ENCODE measurements at regions of chr6 and their contacts with region 1.

Region 1: DNA sequence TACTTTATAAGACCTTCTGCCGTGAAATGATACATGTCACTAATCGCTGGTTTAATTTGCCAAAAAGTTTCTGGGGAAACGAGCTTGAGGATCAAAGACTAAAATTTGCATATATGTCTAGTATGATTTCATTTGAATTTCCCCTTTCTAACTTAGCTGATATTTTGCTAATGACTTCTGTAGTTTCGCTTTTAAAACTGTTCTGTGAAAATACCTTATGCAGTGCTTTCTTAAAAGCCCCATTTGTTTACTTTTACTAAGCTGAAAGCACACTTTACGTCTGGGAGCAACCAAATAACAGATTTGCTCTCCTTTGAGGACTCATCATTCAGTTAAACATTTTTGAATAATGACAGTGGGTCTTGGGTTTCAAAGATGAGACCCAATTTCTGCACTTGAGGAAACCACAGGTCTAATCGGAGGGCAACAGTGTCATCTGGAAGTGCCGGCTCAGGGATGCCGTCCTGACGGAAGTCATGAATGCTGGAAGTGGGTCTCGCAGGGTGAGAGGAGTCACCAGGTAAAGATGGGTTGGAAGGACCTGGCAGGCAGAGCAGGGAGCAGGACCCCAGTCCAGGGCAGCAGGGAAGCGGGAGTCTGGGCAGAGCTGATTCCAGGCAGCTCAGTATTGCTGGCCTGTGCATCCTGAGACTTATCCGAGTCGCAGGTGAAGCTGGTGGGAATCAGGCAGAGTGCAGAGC is 33.2 kb downstream of the PLEKHG1 start:
- DNase-seq: peak; percentile 33
- ATAC-seq: peak; percentile 11
- H3K4me3 Mint-ChIP-seq: peak overlapping the region; percentile 99
- H3K27ac Mint-ChIP-seq: peak overlapping the region; percentile 97
- H3K4me1 Mint-ChIP-seq: peaks cover 91% of the 10 kb centered on the region
- H3K27me3 Mint-ChIP-seq: no peaks in the 10 kb centered on the region
- CTCF ChIP-seq: no peak

Region 2: DNA sequence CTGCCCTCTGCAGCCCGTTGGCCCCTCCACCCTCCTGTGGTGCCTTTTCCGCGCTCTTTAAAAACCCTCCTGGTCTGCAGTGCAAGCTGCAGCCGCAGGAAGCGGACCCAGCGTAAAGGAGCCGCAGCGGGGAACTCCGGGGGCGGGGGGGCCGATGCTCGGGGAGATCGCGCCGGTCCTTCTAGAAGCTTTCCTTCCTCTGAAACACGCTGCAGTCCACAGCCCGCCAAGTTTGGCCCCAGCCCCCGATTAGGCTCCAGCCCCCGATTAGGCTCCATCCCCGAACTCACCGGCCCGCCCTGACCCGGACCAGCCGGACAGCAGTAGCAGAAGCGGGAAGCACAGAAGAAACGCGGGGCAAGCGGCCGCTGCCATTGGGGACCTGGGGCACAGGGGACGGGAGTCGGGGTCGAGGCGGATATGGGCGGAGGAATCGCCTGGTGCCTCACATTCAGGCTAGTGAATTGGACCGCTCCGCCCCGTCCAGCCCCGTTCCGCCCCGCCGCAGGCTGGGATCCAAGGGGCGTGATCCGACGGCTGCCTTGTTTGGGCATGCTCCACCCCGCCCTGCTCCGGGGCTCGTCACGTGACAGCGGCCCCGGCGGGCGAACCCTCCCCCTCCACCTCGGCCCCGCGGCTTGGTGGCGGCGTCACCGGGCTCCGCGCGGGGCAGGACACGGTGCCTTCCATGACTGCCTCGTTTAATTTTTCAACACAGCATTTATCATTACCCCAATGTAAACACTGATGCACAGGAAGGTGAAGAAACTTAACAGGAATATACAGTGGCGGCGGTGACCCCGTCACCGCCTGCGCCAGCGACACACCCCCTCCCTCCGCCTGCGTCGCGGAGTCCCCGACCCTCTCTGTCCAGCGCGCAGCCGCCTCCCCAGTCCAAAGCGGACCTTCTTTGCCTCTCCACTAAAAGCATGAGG is 627.9 kb before region 1 on chr6:
- CTCF ChIA-PET with region 1: no interaction called
- POLR2A ChIA-PET with region 1: no interaction called
- intact Hi-C with region 1: loop called (anchors 10 kb)
- DNase-seq: peak; percentile 82
- ATAC-seq: peak; percentile 79
- H3K4me3 Mint-ChIP-seq: peak overlapping the region; percentile 92
- H3K27ac Mint-ChIP-seq: peak overlapping the region; percentile 95
- H3K4me1 Mint-ChIP-seq: peaks cover 34% of the 10 kb centered on the region
- H3K27me3 Mint-ChIP-seq: peaks cover 12% of the 10 kb centered on the region
- CTCF ChIP-seq: no peak

Region 3: DNA sequence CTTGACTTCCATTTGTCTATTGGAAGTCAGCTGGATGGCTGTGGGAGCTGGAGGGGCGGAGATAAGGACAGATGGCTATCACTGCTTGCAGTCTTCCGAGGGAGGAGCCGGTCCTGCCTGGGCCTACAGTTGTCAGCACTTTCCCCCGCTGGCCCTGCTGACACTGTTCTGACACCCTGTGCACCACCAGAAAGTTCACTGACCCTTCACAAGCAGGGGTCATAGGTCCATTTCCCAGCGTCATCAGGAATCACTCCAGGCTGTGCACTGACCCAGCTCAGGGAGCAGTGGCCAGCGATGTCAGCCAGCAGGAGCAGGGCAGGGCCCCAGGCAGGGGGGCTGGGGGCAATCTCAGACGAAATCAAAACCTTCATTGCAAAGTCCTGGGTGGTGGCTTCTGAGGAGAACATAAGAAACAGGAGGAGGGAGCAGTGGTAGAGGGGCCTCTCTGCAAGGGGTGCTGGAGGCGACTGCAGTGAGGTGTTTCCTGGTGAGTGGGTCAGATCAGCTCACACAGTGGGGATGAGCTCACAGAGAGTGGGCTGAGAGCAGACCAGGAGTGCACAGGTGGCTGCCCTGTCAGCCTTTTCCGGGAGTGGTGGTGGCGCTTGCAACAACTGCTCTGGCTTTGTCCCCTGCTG is 59.8 kb before region 1 on chr6:
- CTCF ChIA-PET with region 1: no interaction called
- POLR2A ChIA-PET with region 1: no interaction called
- intact Hi-C with region 1: loop called (anchors 2 kb)
- DNase-seq: no peak
- ATAC-seq: no peak
- H3K4me3 Mint-ChIP-seq: no peak overlapping the region
- H3K27ac Mint-ChIP-seq: no peak overlapping the region
- H3K4me1 Mint-ChIP-seq: peaks cover 22% of the 10 kb centered on the region
- H3K27me3 Mint-ChIP-seq: peaks cover 50% of the 10 kb centered on the region
- CTCF ChIP-seq: no peak

Region 4: GRCh38 chr6:150692604-150693003 is 59.7 kb after region 1 on chr6:
- CTCF ChIA-PET with region 1: interaction called, 3 read pairs
- POLR2A ChIA-PET with region 1: interaction called, 11 read pairs
- intact Hi-C with region 1: loop called (anchors 2 kb)
- DNase-seq: no peak
- ATAC-seq: no peak
- H3K4me3 Mint-ChIP-seq: no peak overlapping the region
- H3K27ac Mint-ChIP-seq: peak overlapping the region; percentile 71
- H3K4me1 Mint-ChIP-seq: peaks cover 94% of the 10 kb centered on the region
- H3K27me3 Mint-ChIP-seq: no peaks in the 10 kb centered on the region
- CTCF ChIP-seq: no peak

Region 5: DNA sequence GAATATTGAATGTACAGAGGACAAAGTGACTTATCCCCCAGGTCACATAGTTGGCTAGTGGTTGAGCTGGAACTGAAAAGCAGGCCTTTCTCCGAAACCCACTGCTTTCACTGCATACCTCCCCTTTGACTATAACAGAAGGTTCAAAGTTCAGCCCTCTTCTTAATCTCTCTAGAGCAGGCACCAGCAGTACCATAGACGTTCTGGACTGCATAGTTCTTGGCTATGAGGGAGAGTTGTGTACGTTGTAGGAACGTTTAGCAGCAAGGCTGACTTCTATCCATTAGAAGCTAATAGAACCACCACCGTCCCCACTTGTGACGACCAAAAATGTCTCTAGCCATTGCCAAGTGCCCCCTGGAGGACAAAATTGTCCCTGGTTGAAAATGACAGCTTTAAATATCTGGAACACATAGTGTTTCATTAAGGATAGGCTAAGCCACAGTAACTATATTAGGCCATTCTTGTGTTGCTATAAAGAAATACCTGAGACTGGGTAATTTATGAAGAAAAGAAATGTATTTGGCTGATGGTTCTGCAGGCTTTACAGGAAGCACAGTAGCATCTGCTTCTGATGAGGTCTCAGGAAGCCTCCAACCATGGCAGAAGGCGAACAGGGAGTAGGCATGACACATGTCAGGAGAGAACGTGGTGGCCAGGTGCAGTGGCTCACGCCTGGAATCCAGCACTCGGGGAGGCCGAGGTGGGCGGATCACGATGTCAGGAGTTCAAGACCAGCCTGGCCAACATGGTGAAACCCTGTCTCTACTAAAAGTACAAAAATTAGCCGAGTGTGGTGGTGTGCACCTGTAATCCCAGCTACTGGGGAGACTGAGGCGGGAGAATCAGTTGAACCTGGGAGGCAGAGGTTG is 108.9 kb after region 1 on chr6:
- CTCF ChIA-PET with region 1: interaction called, 10 read pairs
- POLR2A ChIA-PET with region 1: interaction called, 6 read pairs
- intact Hi-C with region 1: no loop called
- DNase-seq: no peak
- ATAC-seq: peak; percentile 72
- H3K4me3 Mint-ChIP-seq: no peak overlapping the region
- H3K27ac Mint-ChIP-seq: peak overlapping the region; percentile 57
- H3K4me1 Mint-ChIP-seq: peaks cover 66% of the 10 kb centered on the region
- H3K27me3 Mint-ChIP-seq: no peaks in the 10 kb centered on the region
- CTCF ChIP-seq: peak; percentile 52

Region 6: GRCh38 chr6:150865406-150866146 is 232.6 kb after region 1 on chr6 and contains the start of gene MTHFD1L:
- CTCF ChIA-PET with region 1: no interaction called
- POLR2A ChIA-PET with region 1: no interaction called
- intact Hi-C with region 1: loop called (anchors 5 kb)
- DNase-seq: peak; percentile 78
- ATAC-seq: peak; percentile 77
- H3K4me3 Mint-ChIP-seq: peak within 1 kb of the TSS; percentile 90
- H3K27ac Mint-ChIP-seq: peak within 1 kb of the TSS; percentile 79
- H3K4me1 Mint-ChIP-seq: peaks cover 23% of the 10 kb centered on the region
- H3K27me3 Mint-ChIP-seq: peaks cover 2% of the 10 kb centered on the region
- CTCF ChIP-seq: no peak
- total RNA-seq, gene MTHFD1L: 56.4 and 60.4 TPM in 2 replicates

Region 7: GRCh38 chr6:150881911-150882481 is 249.1 kb after region 1 on chr6:
- CTCF ChIA-PET with region 1: no interaction called
- POLR2A ChIA-PET with region 1: no interaction called
- intact Hi-C with region 1: no loop called
- DNase-seq: no peak
- ATAC-seq: no peak
- H3K4me3 Mint-ChIP-seq: no peak overlapping the region
- H3K27ac Mint-ChIP-seq: no peak overlapping the region
- H3K4me1 Mint-ChIP-seq: peaks cover under 1% of the 10 kb centered on the region
- H3K27me3 Mint-ChIP-seq: no peaks in the 10 kb centered on the region
- CTCF ChIP-seq: no peak

Region 8: GRCh38 chr6:150987371-150987828 is 354.5 kb after region 1 on chr6:
- CTCF ChIA-PET with region 1: no interaction called
- POLR2A ChIA-PET with region 1: no interaction called
- intact Hi-C with region 1: no loop called
- DNase-seq: no peak
- ATAC-seq: no peak
- H3K4me3 Mint-ChIP-seq: no peak overlapping the region
- H3K27ac Mint-ChIP-seq: no peak overlapping the region
- H3K4me1 Mint-ChIP-seq: no peaks in the 10 kb centered on the region
- H3K27me3 Mint-ChIP-seq: no peaks in the 10 kb centered on the region
- CTCF ChIP-seq: no peak

Measured in activated B cell treated with CpG ODN at 0.5 μM for 24 hours (primary cell).